Activated CD4-positive, alpha-beta T cell treated with anti-CD3 and anti-CD28 coated beads, Interleukin-2, amount 10 ng/mL, durations not matched to agents 7 days and 5 days (primary cell): ENCODE measurements at regions of chr1 and their contacts with region 1.

Region 1: GRCh38 chr1:110087812-110088738 is 17.6 kb upstream of the ALX3 start:
- DNase-seq: peak; percentile 65
- H3K4me3 Mint-ChIP-seq: no peak overlapping the region
- H3K27ac Mint-ChIP-seq: no peak overlapping the region
- H3K4me1 Mint-ChIP-seq: peaks cover 10% of the 10 kb centered on the region
- H3K27me3 Mint-ChIP-seq: peaks cover 60% of the 10 kb centered on the region

Region 2: GRCh38 chr1:109827466-109827865 is 260.6 kb before region 1 on chr1:
- CTCF ChIA-PET with region 1: no interaction called
- POLR2A ChIA-PET with region 1: no interaction called
- DNase-seq: no peak
- H3K4me3 Mint-ChIP-seq: no peak overlapping the region
- H3K27ac Mint-ChIP-seq: peak overlapping the region; percentile 21
- H3K4me1 Mint-ChIP-seq: peaks cover 26% of the 10 kb centered on the region
- H3K27me3 Mint-ChIP-seq: no peaks in the 10 kb centered on the region

Region 3: DNA sequence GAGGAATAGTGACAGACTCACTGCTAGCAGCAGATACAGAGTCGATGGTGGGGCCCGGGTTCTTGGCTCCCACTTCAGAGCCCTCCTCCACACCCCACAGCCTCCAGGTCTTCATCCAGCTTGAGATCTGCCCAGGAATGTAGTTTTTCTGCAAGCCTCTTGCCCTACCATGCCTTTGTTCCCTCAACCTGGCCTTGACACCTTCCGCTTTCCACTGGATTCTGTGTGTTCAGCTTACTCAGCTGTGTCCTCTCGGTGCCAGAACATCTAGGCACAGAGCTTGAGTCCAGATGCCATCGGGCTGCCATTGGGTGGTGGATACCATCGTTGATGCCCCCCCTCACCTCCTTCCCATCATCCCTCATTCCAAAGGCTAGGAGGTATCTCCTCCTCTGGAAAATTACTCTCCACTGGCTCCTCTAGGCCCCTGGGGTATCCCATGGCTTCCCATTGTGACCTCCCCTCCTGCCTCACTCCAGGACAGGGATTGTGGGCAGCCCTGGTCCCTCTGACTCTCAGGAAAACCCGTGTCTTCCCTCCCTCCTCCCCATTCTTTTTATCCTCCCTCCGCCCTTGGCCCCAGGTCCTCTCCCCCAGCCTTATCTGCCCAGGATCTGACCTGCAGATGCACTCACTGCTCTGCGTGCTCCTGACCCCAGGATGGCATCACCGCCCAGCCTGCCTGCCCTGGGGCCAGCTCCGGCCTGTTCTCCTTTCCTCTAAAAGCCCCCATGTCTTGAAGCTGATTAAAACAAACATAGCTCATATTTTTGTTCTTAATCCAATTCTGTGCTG is 10.0 kb after region 1 on chr1:
- CTCF ChIA-PET with region 1: interaction called, 68 read pairs
- POLR2A ChIA-PET with region 1: no interaction called
- DNase-seq: no peak
- H3K4me3 Mint-ChIP-seq: no peak overlapping the region
- H3K27ac Mint-ChIP-seq: no peak overlapping the region
- H3K4me1 Mint-ChIP-seq: no peaks in the 10 kb centered on the region
- H3K27me3 Mint-ChIP-seq: peaks cover 7% of the 10 kb centered on the region

Region 4: DNA sequence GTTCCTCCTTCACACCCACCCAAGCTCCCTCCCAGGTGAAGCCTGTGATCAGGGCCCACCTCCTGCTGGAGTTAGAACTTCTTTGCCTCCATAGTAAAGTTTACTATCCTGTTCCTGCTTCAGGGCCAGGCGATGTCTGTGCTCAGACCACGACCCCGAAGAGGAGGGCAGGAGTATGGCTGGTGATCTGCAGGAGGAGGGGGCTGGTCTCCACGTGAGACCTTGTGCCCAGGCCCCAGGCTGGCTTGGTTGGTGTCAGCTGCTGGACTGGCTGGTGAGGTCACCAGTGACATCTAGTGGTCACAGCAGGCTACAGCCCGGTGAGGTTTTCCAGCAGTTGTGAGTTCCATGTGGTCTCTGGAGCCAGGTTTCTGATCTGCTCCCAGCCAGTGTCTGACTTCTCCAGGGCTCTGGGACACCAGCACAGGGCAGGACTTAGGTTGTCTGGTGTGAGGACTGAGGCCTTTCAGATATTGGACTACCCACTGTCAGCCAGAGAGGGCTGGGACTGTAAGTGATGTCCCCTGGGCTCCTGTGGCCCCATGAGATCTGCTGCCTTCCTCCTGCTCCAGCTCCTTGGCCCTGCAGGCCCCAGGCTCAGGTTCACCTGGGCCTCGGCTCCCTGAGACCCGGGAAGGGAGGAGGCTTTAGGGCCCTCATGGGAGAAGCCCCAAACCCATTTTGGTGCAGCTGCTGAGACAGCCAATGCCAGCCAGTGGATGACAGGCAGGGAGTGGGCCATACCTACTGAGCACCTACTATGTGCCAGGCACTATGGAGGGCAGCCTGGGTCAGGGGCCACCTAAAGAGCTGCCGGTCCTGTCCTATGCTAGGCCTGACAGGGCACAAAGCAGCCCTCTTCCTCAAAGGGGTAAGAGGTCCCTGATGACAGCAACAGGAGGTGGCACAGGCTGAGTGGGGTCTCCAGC is 18.2 kb after region 1 on chr1:
- CTCF ChIA-PET with region 1: interaction called, 68 read pairs
- POLR2A ChIA-PET with region 1: no interaction called
- DNase-seq: peak; percentile 62
- H3K4me3 Mint-ChIP-seq: no peak overlapping the region
- H3K27ac Mint-ChIP-seq: no peak overlapping the region
- H3K4me1 Mint-ChIP-seq: no peaks in the 10 kb centered on the region
- H3K27me3 Mint-ChIP-seq: peaks cover 8% of the 10 kb centered on the region